Pancreas (tissue), 10 donors: ENCODE measurements at regions of chr4 and their contacts with region 1.

Region 1: DNA sequence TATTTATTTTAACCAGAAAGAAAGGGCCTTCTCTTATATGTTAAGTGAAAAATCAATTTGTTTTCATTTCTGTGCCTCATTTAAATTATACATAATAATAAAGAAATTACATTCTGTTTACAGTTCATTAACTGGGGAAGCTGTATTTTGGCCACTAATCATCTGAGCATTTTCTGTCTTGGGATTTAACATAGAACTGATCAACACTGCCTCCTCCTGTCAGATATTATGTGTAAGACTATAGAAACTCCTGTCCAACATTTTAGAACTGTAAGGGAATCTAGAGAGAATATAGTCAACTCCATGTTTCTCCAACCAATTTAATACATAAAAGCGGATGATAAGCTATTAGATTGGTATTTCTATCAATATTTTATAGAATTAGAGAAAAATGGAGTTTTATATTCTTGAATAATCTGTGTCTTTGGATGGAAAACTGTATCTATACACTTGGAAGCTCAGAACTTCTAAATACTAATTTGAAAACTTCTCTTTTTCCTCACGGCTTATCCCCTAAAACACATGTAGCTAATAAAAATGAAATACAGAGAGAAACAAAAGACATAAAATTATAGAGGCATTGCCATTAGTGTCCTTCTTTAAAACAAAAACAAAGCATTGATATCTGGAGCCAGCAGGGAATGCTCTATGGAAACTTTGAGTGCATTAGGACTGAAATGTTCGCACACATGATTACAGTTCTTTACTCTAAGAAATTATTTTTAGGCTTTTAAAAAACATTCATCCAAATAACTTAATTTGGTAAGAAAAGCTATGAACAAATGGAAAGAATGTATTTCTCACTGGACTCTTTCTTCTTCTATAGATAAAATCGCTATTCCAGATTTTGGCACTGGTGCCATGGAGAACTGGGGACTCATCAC is 33.1 kb downstream of the ENPEP start:
- DNase-seq: no peak
- ATAC-seq: no peak
- H3K4me3 ChIP-seq: no peak overlapping the region
- H3K27ac ChIP-seq: no peak overlapping the region
- H3K4me1 ChIP-seq: no peaks in the 10 kb centered on the region
- H3K27me3 ChIP-seq: no peaks in the 10 kb centered on the region
- CTCF ChIP-seq: no peak

Region 2: GRCh38 chr4:110005461-110006056 is 503.5 kb before region 1 on chr4:
- intact Hi-C with region 1: loop called in 2 of 3 experiments (anchors 10 kb)
- DNase-seq: no peak
- ATAC-seq: peak in 3 of 4 donors; percentile 77 to 85 (median 84)
- H3K4me3 ChIP-seq: no peak overlapping the region
- H3K27ac ChIP-seq: no peak overlapping the region
- H3K4me1 ChIP-seq: no peaks in the 10 kb centered on the region
- H3K27me3 ChIP-seq: no peaks in the 10 kb centered on the region
- CTCF ChIP-seq: peak in 2 of 4 donors; percentile 38 to 65

Region 3: GRCh38 chr4:110049951-110050925 is 458.8 kb before region 1 on chr4:
- intact Hi-C with region 1: no loop called
- DNase-seq: peak in 1 of 6 donors; percentile 40
- ATAC-seq: peak in 3 of 4 donors; percentile 67 to 78 (median 71)
- H3K4me3 ChIP-seq: no peak overlapping the region
- H3K27ac ChIP-seq: no peak overlapping the region
- H3K4me1 ChIP-seq: no peaks in the 10 kb centered on the region
- H3K27me3 ChIP-seq: no peaks in the 10 kb centered on the region
- CTCF ChIP-seq: peak in 3 of 4 donors; percentile 33 to 65 (median 55)

Region 4: DNA sequence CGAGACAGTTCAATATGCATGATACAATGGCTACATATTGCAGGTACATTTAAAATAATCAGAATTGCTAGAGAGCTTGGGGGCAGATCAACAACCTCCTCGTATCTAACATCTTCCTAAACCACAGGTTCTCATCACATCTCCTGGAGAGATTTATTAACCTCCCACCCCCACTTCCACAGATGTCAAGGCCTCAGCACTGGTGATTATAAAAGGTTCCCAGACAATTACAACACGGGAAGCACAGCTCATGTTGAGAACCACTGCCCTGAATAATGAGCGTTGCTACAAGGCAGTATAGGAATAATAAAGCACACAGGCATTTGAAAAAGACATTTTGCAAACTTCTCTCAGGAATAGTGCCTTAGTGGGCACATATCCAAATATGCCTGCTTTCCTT is 353.4 kb before region 1 on chr4:
- intact Hi-C with region 1: no loop called
- DNase-seq: no peak
- ATAC-seq: no peak
- H3K4me3 ChIP-seq: no peak overlapping the region
- H3K27ac ChIP-seq: no peak overlapping the region
- H3K4me1 ChIP-seq: no peaks in the 10 kb centered on the region
- H3K27me3 ChIP-seq: no peaks in the 10 kb centered on the region
- CTCF ChIP-seq: no peak

Region 5: GRCh38 chr4:110310795-110311194 is 198.3 kb before region 1 on chr4:
- intact Hi-C with region 1: loop called in 1 of 3 experiments (anchors 5 kb)
- DNase-seq: no peak
- ATAC-seq: no peak
- H3K4me3 ChIP-seq: no peak overlapping the region
- H3K27ac ChIP-seq: no peak overlapping the region
- H3K4me1 ChIP-seq: no peaks in the 10 kb centered on the region
- H3K27me3 ChIP-seq: no peaks in the 10 kb centered on the region
- CTCF ChIP-seq: no peak